Naive thymus-derived CD4-positive, alpha-beta T cell (primary cell): ENCODE measurements at regions of chr1 and their contacts with region 1.

Region 1: DNA sequence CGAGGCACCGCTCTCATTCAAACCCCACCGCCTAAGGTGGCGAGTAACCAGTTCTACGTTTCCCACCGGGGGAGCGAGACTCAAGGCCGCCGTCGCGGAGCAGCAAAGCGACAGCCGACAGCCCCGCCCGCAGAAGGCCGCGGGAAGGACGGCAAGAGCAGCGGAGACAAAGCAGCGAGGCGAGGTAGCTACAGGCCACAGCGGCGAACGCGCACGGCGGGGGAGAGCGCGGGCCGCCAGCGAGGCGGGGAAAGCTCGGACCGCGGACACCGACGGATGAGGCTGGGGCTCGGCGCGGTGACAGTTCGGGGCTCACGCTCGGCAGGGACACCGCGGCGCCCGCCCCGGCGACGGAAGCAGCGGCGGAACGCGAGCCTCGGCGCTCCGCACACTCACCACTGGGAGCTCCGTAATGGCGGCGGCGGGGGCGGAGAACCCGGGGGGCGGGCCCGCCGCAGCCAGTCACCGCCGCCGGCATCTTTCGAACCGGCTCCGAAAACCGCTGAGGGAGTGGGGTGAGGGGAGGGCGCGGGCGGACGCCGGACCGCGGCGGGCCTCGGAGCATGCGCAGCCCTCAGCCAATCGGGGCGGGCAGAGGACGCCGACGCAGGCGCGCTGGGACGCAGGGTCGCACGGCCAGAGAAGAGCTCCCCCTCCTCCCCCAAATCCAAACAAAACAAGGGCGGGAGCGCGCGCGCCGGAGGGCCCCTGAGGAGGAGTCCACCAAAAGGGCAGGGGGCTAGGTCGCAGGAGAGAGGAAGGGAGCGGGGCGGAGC is 666 bp downstream of the HP1BP3 start:
- DNase-seq: peak; percentile 93 to 99 (median 97)
- ATAC-seq: peak; percentile 86
- H3K4me3 ChIP-seq: peak overlapping the region; percentile 85
- H3K4me3 Mint-ChIP-seq: peak overlapping the region; percentile 90 to 100 (median 98)
- H3K27ac ChIP-seq: peak overlapping the region; percentile 94
- H3K27ac Mint-ChIP-seq: peak overlapping the region; percentile 87 to 99 (median 92)
- H3K4me1 ChIP-seq: peaks cover 28 to 30% of the 10 kb centered on the region in 2 donors
- H3K4me1 Mint-ChIP-seq: peaks cover 16 to 49% (median 36%) of the 10 kb centered on the region in 7 donors
- H3K27me3 ChIP-seq: no peaks in the 10 kb centered on the region
- H3K27me3 Mint-ChIP-seq: peaks cover 0 to 2% (median 0%) of the 10 kb centered on the region in 5 donors

Region 2: DNA sequence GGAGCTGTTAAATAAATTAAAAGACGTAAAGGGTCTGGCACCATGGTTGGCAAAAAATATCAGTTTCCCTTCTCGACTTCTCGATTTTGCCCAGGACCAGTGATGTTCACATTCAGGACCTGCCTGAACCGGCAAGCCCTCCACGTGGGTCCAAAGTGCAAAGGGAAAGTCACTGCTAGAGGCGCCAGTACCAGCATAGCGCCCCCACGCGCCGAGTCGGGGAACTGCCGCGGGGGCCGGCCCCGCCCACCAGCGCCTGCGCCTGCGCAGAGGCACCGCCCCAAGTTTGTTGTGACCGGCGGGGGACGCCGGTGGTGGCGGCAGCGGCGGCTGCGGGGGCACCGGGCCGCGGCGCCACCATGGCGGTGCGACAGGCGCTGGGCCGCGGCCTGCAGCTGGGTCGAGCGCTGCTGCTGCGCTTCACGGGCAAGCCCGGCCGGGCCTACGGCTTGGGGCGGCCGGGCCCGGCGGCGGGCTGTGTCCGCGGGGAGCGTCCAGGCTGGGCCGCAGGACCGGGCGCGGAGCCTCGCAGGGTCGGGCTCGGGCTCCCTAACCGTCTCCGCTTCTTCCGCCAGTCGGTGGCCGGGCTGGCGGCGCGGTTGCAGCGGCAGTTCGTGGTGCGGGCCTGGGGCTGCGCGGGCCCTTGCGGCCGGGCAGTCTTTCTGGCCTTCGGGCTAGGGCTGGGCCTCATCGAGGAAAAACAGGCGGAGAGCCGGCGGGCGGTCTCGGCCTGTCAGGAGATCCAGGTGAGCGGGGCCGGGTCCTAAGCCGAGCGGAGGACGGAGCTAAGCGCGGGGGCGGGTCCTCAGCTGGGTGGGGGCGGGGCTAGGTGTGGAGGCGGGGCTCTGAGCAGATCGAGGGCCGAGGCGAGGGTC is 153.0 kb before region 1 on chr1 and contains the start of gene PINK1:
- CTCF ChIA-PET with region 1: interaction called, 3 read pairs
- POLR2A ChIA-PET with region 1: interaction called, 7 read pairs
- intact Hi-C with region 1: loop called in 1 of 2 experiments (anchors 1 kb)
- DNase-seq: peak; percentile 78 to 99 (median 90)
- ATAC-seq: peak; percentile 92
- H3K4me3 ChIP-seq: peak within 1 kb of the TSS; percentile 80
- H3K4me3 Mint-ChIP-seq: peak within 1 kb of the TSS; percentile 78 to 98 (median 94)
- H3K27ac ChIP-seq: peak within 1 kb of the TSS; percentile 86
- H3K27ac Mint-ChIP-seq: peak within 1 kb of the TSS; percentile 69 to 94 (median 88)
- H3K4me1 ChIP-seq: peaks cover 8 to 9% of the 10 kb centered on the region in 2 donors
- H3K4me1 Mint-ChIP-seq: peaks cover 0 to 13% (median 8%) of the 10 kb centered on the region in 7 donors
- H3K27me3 ChIP-seq: no peaks in the 10 kb centered on the region
- H3K27me3 Mint-ChIP-seq: peaks cover 0 to 22% (median 2%) of the 10 kb centered on the region in 5 donors
- total RNA-seq, gene PINK1: 4.3 to 19.7 (median 13.1) TPM

Region 3: GRCh38 chr1:20693623-20694022 is 92.8 kb before region 1 on chr1:
- CTCF ChIA-PET with region 1: no interaction called
- POLR2A ChIA-PET with region 1: no interaction called
- intact Hi-C with region 1: no loop called
- DNase-seq: no peak
- ATAC-seq: no peak
- H3K4me3 ChIP-seq: no peak overlapping the region
- H3K4me3 Mint-ChIP-seq: no peak overlapping the region
- H3K27ac ChIP-seq: no peak overlapping the region
- H3K27ac Mint-ChIP-seq: no peak overlapping the region
- H3K4me1 ChIP-seq: peaks cover 0 to 5% of the 10 kb centered on the region in 2 donors
- H3K4me1 Mint-ChIP-seq: peaks cover 3 to 8% (median 4%) of the 10 kb centered on the region in 7 donors
- H3K27me3 ChIP-seq: no peaks in the 10 kb centered on the region
- H3K27me3 Mint-ChIP-seq: peaks cover 0 to 6% (median 0%) of the 10 kb centered on the region in 5 donors

Region 4: GRCh38 chr1:20732588-20733360 is 53.7 kb before region 1 on chr1 and contains the start of gene SH2D5:
- CTCF ChIA-PET with region 1: no interaction called
- POLR2A ChIA-PET with region 1: interaction called, 7 read pairs
- intact Hi-C with region 1: loop called (anchors 1 to 5 kb)
- DNase-seq: peak in 8 of 9 donors; percentile 21 to 62 (median 47)
- ATAC-seq: peak; percentile 85
- H3K4me3 ChIP-seq: peak within 1 kb of the TSS; percentile 63
- H3K4me3 Mint-ChIP-seq: peak within 1 kb of the TSS; percentile 86 to 95 (median 88)
- H3K27ac ChIP-seq: no peak within 1 kb of the TSS
- H3K27ac Mint-ChIP-seq: peak within 1 kb of the TSS in 6 of 9 donors; percentile 28 to 83 (median 60)
- H3K4me1 ChIP-seq: peaks cover 8 to 14% of the 10 kb centered on the region in 2 donors
- H3K4me1 Mint-ChIP-seq: peaks cover 10 to 23% (median 17%) of the 10 kb centered on the region in 7 donors
- H3K27me3 ChIP-seq: peaks cover 0 to 8% of the 10 kb centered on the region in 2 donors
- H3K27me3 Mint-ChIP-seq: peaks cover 10 to 49% (median 21%) of the 10 kb centered on the region in 5 donors
- total RNA-seq, gene SH2D5: 0.35 TPM in 2 of 5 experiments, not detected in the others

Region 5: DNA sequence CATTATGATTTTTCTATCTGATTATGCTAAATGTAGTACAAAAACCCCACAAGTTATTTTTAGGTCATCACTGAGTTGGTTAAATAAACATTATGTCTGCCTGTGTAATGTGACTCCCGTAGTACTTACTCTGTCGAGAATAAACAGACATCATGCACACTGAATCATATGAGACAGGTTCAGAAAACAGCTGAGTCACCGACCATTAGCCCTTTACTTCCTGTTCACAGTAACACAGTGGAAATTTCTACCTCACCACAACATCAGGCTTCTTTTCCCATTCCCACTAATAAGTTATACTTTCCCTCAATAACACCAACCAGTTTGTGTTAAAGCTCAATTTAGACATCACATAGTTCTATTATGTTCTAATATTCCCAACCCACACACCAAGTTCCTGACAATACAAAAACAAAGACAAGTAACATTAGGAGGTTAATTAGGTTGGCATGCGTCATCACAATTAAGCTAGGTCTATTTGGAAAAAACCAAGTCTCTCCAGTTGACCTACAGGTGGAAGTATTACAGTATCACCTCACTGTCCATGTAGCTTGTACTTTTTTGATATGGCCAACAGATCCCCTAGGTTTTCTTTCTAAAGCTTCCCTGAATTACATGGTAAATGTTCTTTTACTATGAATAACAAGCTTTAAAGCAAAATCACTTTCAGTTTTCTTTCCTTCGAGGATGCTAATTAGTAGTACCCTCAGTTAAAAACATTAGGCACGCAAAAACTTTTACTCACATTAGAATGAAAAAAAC is 236.0 kb after region 1 on chr1:
- CTCF ChIA-PET with region 1: no interaction called
- POLR2A ChIA-PET with region 1: no interaction called
- intact Hi-C with region 1: loop called in 1 of 2 experiments (anchors 5 kb)
- DNase-seq: peak in 2 of 9 donors; percentile 2 to 11
- ATAC-seq: peak; percentile 94
- H3K4me3 ChIP-seq: no peak overlapping the region
- H3K4me3 Mint-ChIP-seq: peak overlapping the region in 6 of 10 donors; percentile 2 to 80 (median 14)
- H3K27ac ChIP-seq: peak overlapping the region; percentile 1
- H3K27ac Mint-ChIP-seq: peak overlapping the region in 6 of 9 donors; percentile 10 to 91 (median 36)
- H3K4me1 ChIP-seq: peaks cover 5 to 11% of the 10 kb centered on the region in 2 donors
- H3K4me1 Mint-ChIP-seq: peaks cover 8 to 23% (median 9%) of the 10 kb centered on the region in 7 donors
- H3K27me3 ChIP-seq: no peaks in the 10 kb centered on the region
- H3K27me3 Mint-ChIP-seq: no peaks in the 10 kb centered on the region

Region 6: DNA sequence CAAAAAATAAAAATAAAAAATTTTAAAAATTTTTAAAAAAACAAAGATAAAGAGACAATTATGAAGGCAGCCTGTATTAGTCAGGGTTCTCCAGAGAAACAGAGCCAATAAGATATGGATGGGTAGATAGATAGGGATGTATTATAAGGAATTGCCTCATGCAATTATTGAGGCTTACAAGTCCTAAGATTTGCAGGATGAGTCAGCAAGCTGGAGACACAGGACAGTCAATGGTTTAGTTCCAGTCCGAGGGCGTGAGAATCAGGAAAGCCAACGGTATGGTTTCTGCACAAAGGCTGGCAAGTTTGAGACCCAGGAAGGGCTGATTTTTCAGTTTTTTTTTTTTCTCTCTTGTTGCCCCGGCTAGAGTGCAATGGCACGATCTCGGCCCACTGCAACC is 414.3 kb after region 1 on chr1:
- CTCF ChIA-PET with region 1: no interaction called
- POLR2A ChIA-PET with region 1: no interaction called
- intact Hi-C with region 1: loop called in 1 of 2 experiments (anchors 5 kb)
- DNase-seq: no peak
- ATAC-seq: no peak
- H3K4me3 ChIP-seq: no peak overlapping the region
- H3K4me3 Mint-ChIP-seq: no peak overlapping the region
- H3K27ac ChIP-seq: no peak overlapping the region
- H3K27ac Mint-ChIP-seq: no peak overlapping the region
- H3K4me1 ChIP-seq: no peaks in the 10 kb centered on the region
- H3K4me1 Mint-ChIP-seq: no peaks in the 10 kb centered on the region
- H3K27me3 ChIP-seq: no peaks in the 10 kb centered on the region
- H3K27me3 Mint-ChIP-seq: peaks cover 4 to 9% (median 5%) of the 10 kb centered on the region in 5 donors

Region 7: GRCh38 chr1:22451702-22452474 is 1665.4 kb after region 1 on chr1 and contains the start of gene ZBTB40:
- CTCF ChIA-PET with region 1: no interaction called
- POLR2A ChIA-PET with region 1: no interaction called
- intact Hi-C with region 1: loop called (anchors 5 kb)
- DNase-seq: peak; percentile 92 to 96 (median 94)
- ATAC-seq: peak; percentile 98
- H3K4me3 ChIP-seq: peak within 1 kb of the TSS; percentile 83
- H3K4me3 Mint-ChIP-seq: peak within 1 kb of the TSS; percentile 86 to 98 (median 92)
- H3K27ac ChIP-seq: peak within 1 kb of the TSS; percentile 85
- H3K27ac Mint-ChIP-seq: peak within 1 kb of the TSS; percentile 91 to 98 (median 95)
- H3K4me1 ChIP-seq: peaks cover 4 to 10% of the 10 kb centered on the region in 2 donors
- H3K4me1 Mint-ChIP-seq: peaks cover 11 to 52% (median 47%) of the 10 kb centered on the region in 7 donors
- H3K27me3 ChIP-seq: no peaks in the 10 kb centered on the region
- H3K27me3 Mint-ChIP-seq: peaks cover 0 to 4% (median 0%) of the 10 kb centered on the region in 5 donors
- total RNA-seq, gene ZBTB40: 23.1 to 60.6 (median 43.5) TPM